Right lobe of liver (tissue), 6 donors: ENCODE measurements at regions of chr3 and their contacts with region 1.

Region 1: DNA sequence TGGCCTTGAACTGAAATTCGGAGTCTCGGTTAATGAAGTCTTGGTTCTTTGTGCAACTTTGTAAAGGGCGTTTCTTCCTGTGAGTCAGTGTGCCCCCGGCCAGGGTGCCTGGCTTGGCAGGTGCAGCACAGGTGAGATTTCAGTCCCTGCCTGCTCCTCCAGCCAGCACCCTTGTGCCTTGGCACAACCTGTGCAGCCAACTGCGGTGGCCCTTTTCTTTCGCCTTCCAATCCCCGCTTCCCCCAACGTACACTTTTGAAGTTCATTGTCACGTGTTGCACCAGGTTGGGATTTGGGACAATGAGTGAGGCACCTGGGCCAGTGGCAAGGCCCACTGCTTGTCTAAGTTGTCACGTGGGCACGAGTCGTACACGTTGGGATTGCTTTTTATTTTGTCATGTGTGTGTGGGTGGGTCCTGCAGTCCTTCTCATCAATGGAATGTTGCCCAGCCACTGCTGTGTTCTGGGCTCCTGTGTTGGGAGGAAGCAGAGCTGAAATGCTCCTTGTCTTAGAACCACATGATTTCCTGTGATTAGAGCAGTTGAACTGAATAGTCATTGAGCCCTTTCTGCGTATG is 242.9 kb upstream of the BHLHE40 start:
- DNase-seq: no peak
- ATAC-seq: peak; percentile 10 to 43 (median 25)
- H3K4me3 ChIP-seq: no peak overlapping the region
- H3K27ac ChIP-seq: no peak overlapping the region
- H3K4me1 ChIP-seq: peaks cover 0 to 5% (median 3%) of the 10 kb centered on the region in 4 donors
- H3K27me3 ChIP-seq: no peaks in the 10 kb centered on the region
- CTCF ChIP-seq: no peak
- POLR2A ChIP-seq: no peak

Region 2: GRCh38 chr3:4877173-4877787 is 140.9 kb after region 1 on chr3:
- intact Hi-C with region 1: loop called in 1 of 2 experiments (anchors 10 kb)
- DNase-seq: no peak
- ATAC-seq: peak; percentile 80 to 98 (median 86)
- H3K4me3 ChIP-seq: no peak overlapping the region
- H3K27ac ChIP-seq: no peak overlapping the region
- H3K4me1 ChIP-seq: peaks cover 0 to 5% (median 0%) of the 10 kb centered on the region in 4 donors
- H3K27me3 ChIP-seq: no peaks in the 10 kb centered on the region
- CTCF ChIP-seq: no peak
- POLR2A ChIP-seq: no peak

Region 3: GRCh38 chr3:4978204-4978965 is 242.0 kb after region 1 on chr3:
- intact Hi-C with region 1: loop called in 1 of 2 experiments (anchors 10 kb)
- DNase-seq: peak; percentile 97 to 99 (median 99)
- ATAC-seq: peak; percentile 56 to 71 (median 64)
- H3K4me3 ChIP-seq: peak overlapping the region; percentile 45 to 92 (median 57)
- H3K27ac ChIP-seq: peak overlapping the region; percentile 93 to 100 (median 98)
- H3K4me1 ChIP-seq: peaks cover 0 to 33% (median 6%) of the 10 kb centered on the region in 4 donors
- H3K27me3 ChIP-seq: no peaks in the 10 kb centered on the region
- CTCF ChIP-seq: no peak
- POLR2A ChIP-seq: peak; percentile 83